Left ventricle myocardium superior (tissue), 1 donor: ENCODE measurements at regions of chr1 and their contacts with region 1.

Region 1: GRCh38 chr1:40612345-40612831 is 53.1 kb downstream of the RIMS3 start:
- DNase-seq: no peak
- ATAC-seq: peak; percentile 93

Region 2: DNA sequence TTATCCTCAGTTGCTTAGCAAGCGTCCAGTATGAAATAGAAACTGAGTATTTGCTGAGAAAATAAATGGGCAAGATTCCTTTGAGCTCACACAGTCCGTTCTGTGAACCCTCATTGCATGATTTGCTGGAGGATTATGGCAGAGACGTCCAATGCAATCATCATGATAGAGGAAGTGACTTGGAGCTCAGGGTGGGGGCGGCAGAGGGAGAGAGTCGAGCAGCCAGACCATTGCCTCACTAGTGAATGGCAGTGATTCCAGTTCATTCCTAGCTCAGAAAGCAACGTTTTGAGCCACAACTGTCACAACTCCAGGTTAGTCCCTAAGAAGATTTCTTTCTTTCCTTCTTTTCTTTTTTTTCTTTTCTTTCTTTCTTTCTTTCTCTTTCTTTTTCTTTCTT is 267.8 kb before region 1 on chr1:
- intact Hi-C with region 1: no loop called
- DNase-seq: peak; percentile 58
- ATAC-seq: peak; percentile 65

Region 3: DNA sequence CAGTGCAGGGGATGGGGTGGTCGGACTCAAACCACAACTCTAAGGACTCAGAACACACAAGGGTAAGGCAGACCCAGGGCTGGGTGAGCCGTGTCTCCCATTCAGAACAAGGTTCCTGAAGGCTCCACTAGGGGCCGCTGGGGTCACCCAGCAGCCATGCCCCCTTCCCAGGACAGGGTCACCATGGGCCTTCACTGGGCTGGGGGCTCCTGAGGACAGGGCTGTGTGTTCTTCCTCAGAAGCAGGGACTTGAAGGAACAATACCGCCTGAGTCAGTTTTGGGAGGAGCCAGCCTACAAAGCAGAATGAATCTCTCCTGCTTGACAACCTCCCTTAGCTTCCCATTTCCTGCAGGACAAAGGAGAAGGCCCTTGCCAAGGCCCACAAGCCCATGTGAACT is 37.7 kb after region 1 on chr1:
- intact Hi-C with region 1: no loop called
- DNase-seq: no peak
- ATAC-seq: peak; percentile 15

Region 4: GRCh38 chr1:40668769-40669525 is 56.6 kb after region 1 on chr1:
- intact Hi-C with region 1: loop called (anchors 10 kb)
- DNase-seq: peak; percentile 83
- ATAC-seq: peak; percentile 61